Dendritic cell treated with granulocyte-macrophage colony-stimulating factor and Interleukin-4, amounts not matched to agents 40 ng/mL and 50 ng/mL, for 4 days (primary cell): ENCODE measurements at regions of chr11 and their contacts with region 1.

Region 1: GRCh38 chr11:15819679-15820286 is 536.6 kb downstream of the SOX6 start:
- H3K4me3 Mint-ChIP-seq: no peak overlapping the region
- H3K27ac Mint-ChIP-seq: peak overlapping the region; percentile 91
- H3K4me1 Mint-ChIP-seq: peaks cover 63% of the 10 kb centered on the region
- H3K27me3 Mint-ChIP-seq: no peaks in the 10 kb centered on the region

Region 2: DNA sequence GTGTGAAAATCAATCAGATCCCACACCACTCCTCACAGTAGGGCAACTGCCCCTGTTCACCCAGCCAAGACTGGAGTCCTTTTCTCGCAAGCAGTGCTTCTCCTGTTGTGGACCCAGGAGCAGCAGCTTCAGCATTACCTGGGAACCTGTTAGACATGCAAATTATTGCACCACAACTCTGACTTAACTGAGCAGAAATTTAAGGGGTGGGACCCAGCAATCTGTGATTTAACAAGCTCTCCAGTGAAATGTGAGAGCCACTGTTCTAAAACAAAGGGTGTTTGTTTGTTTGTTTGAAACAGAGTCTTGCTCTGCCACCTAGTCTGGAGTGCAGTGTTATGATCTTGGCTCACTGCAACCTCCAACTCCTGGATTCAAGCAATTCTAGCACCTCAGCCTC is 54.8 kb before region 1 on chr11:
- intact Hi-C with region 1: loop called (anchors 2 kb)
- H3K4me3 Mint-ChIP-seq: no peak overlapping the region
- H3K27ac Mint-ChIP-seq: peak overlapping the region; percentile 75
- H3K4me1 Mint-ChIP-seq: peaks cover 44% of the 10 kb centered on the region
- H3K27me3 Mint-ChIP-seq: peaks cover 14% of the 10 kb centered on the region

Region 3: DNA sequence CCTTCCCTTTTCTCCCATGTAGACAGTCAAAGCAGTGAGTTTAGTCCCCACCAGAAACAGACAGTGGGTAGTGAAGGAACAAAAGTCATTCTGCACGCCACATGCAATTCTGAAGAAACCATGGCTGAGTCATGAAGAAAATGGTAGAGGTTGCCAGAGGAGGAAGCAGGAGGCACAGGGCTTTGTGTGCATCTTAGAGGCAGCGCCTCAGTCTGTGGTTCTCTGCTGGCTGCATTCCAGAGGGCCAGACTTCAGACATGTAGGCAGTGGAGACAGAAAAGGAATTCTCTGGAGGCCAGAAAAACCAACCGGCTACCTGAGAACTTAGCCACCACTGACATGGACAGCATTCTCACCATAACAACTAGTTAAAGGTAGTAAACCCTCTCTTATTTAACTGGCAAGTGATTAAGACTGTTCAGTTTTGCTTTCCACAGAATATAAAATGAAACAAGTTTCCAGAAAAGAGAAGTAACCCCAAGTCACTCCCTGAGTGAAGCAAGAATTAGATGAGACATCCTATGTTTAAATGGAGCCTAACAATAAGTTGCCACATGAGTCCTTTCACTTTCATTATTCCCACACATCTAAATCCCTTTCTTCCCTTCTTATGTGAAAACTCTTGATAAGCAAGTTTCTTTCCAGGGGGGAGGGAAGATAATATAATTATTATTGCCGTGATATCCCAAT is 19.5 kb before region 1 on chr11:
- intact Hi-C with region 1: loop called (anchors 1 kb)
- H3K4me3 Mint-ChIP-seq: peak overlapping the region; percentile 49
- H3K27ac Mint-ChIP-seq: peak overlapping the region; percentile 96
- H3K4me1 Mint-ChIP-seq: peaks cover 45% of the 10 kb centered on the region
- H3K27me3 Mint-ChIP-seq: no peaks in the 10 kb centered on the region

Region 4: GRCh38 chr11:15845261-15845660 is 25.5 kb after region 1 on chr11:
- intact Hi-C with region 1: loop called (anchors 2 kb)
- H3K4me3 Mint-ChIP-seq: no peak overlapping the region
- H3K27ac Mint-ChIP-seq: peak overlapping the region; percentile 99
- H3K4me1 Mint-ChIP-seq: peaks cover 55% of the 10 kb centered on the region
- H3K27me3 Mint-ChIP-seq: peaks cover 20% of the 10 kb centered on the region

Region 5: GRCh38 chr11:15859411-15859810 is 39.6 kb after region 1 on chr11:
- intact Hi-C with region 1: no loop called
- H3K4me3 Mint-ChIP-seq: no peak overlapping the region
- H3K27ac Mint-ChIP-seq: no peak overlapping the region
- H3K4me1 Mint-ChIP-seq: no peaks in the 10 kb centered on the region
- H3K27me3 Mint-ChIP-seq: peaks cover 22% of the 10 kb centered on the region